ENCODE measurements at regions of chr5 and their contacts with region 1.

Region 1: DNA sequence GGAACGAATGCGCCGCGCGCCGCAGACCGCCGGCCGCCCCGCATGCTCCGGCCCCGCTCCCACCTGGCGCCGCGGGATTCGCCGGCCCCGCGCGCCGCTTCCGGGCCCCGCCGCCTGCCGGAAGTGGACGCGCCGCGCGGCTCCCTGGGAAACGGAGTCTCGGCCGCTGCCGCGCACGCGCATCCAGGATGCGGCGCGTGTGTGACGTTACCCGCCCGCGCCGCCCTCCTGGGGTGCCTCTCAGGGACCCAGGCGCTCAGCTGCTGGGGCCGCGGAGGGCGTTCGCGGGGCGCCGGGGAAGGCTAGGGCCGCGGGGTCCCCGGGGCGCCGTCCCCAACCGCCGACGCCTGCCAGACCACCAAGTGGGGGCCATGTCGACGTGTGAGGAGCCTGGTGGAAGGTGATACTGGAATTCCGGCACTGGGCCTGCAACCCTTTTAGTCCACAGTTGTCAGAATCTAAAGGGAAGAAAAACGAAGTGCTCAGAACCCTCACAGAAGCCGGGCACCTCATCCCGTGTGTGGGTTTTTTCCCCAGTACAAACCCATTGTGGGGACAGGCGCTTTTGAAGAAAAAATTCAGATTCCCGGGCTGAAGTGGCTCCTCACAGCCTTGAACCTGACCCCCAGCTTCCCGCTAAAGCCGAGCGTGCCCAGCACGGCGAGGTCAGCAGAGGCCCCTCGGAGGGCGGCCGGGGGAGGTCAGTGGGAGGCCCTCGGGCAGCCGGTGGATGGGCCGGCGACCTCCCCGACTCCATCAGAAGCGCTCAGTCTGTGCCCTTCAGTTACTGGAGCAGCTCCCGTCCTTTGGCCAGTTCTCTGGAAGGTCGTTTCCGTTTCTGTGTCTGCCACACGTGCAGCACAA is at the start of gene CLPTM1L:
- DNase-seq: peak; percentile 84 to 88
- H3K4me3 ChIP-seq: peak within 1 kb of the TSS; percentile 51 to 99 (median 91)
- H3K27ac ChIP-seq: peak within 1 kb of the TSS; percentile 61 to 92 (median 82)
- H3K4me1 ChIP-seq: peaks cover 25% of the 10 kb centered on the region in 2 donors
- H3K27me3 ChIP-seq: no peaks in the 10 kb centered on the region
- CTCF ChIP-seq: peak in 1 of 6 experiments; percentile 32
- POLR2A ChIP-seq: peak in 1 of 2 donors; percentile 80
- total RNA-seq, gene CLPTM1L: 149 to 215 (median 179) TPM

Region 2: GRCh38 chr5:1268666-1269065 is 76.5 kb before region 1 on chr5:
- intact Hi-C with region 1: no loop called
- DNase-seq: no peak
- H3K4me3 ChIP-seq: no peak overlapping the region
- H3K27ac ChIP-seq: no peak overlapping the region
- H3K4me1 ChIP-seq: no peaks in the 10 kb centered on the region
- H3K27me3 ChIP-seq: no peaks in the 10 kb centered on the region
- CTCF ChIP-seq: no peak
- POLR2A ChIP-seq: no peak

Region 3: GRCh38 chr5:1380011-1380817 is 35.0 kb after region 1 on chr5:
- intact Hi-C with region 1: loop called (anchors 5 kb)
- DNase-seq: peak; percentile 78 to 80
- H3K4me3 ChIP-seq: no peak overlapping the region
- H3K27ac ChIP-seq: no peak overlapping the region
- H3K4me1 ChIP-seq: peaks cover 0 to 16% of the 10 kb centered on the region in 2 donors
- H3K27me3 ChIP-seq: no peaks in the 10 kb centered on the region
- CTCF ChIP-seq: peak; percentile 48 to 90 (median 66)
- POLR2A ChIP-seq: no peak

Region 4: GRCh38 chr5:1799602-1800471 is 454.6 kb after region 1 on chr5 and contains the start of gene MRPL36:
- intact Hi-C with region 1: loop called (anchors 10 kb)
- DNase-seq: peak; percentile 94 to 96
- H3K4me3 ChIP-seq: peak within 1 kb of the TSS; percentile 19 to 81 (median 75)
- H3K27ac ChIP-seq: peak within 1 kb of the TSS; percentile 79 to 94 (median 86)
- H3K4me1 ChIP-seq: peaks cover 4 to 16% of the 10 kb centered on the region in 2 donors
- H3K27me3 ChIP-seq: no peaks in the 10 kb centered on the region
- CTCF ChIP-seq: no peak
- POLR2A ChIP-seq: peak; percentile 38 to 94
- total RNA-seq, gene MRPL36: 10.4 to 41.7 (median 33.6) TPM

Measured in thyroid gland (tissue), 4 donors.